WTC11 (cell line): ENCODE measurements at regions of chr17 and their contacts with region 1.

Region 1: GRCh38 chr17:69069226-69069750 is 8.6 kb upstream of the ABCA9 start:
- DNase-seq: no peak
- ATAC-seq: peak; percentile 91
- H3K4me3 Mint-ChIP-seq: no peak overlapping the region
- H3K27ac Mint-ChIP-seq: peak overlapping the region; percentile 57; the same call in 1 of the 2 replicates
- H3K4me1 Mint-ChIP-seq: peaks cover 17% of the 10 kb centered on the region
- H3K27me3 Mint-ChIP-seq: no peaks in the 10 kb centered on the region
- CTCF ChIP-seq: no peak

Region 2: GRCh38 chr17:68924786-68925720 is 144.2 kb before region 1 on chr17:
- CTCF ChIA-PET with region 1: no interaction called
- POLR2A ChIA-PET with region 1: no interaction called
- DNase-seq: no peak
- ATAC-seq: no peak
- H3K4me3 Mint-ChIP-seq: no peak overlapping the region
- H3K27ac Mint-ChIP-seq: no peak overlapping the region
- H3K4me1 Mint-ChIP-seq: peaks cover 33% of the 10 kb centered on the region
- H3K27me3 Mint-ChIP-seq: no peaks in the 10 kb centered on the region
- CTCF ChIP-seq: no peak

Region 3: GRCh38 chr17:69084911-69085310 is 15.6 kb after region 1 on chr17:
- CTCF ChIA-PET with region 1: interaction called, 10 read pairs
- POLR2A ChIA-PET with region 1: no interaction called
- DNase-seq: peak; percentile 79
- ATAC-seq: peak; percentile 100
- H3K4me3 Mint-ChIP-seq: no peak overlapping the region
- H3K27ac Mint-ChIP-seq: no peak overlapping the region
- H3K4me1 Mint-ChIP-seq: peaks cover 3% of the 10 kb centered on the region; the same call in 1 of the 2 replicates
- H3K27me3 Mint-ChIP-seq: peaks cover 2% of the 10 kb centered on the region; the same call in 1 of the 2 replicates
- CTCF ChIP-seq: peak; percentile 68

Region 4: GRCh38 chr17:69150333-69150732 is 81.0 kb after region 1 on chr17:
- CTCF ChIA-PET with region 1: no interaction called
- POLR2A ChIA-PET with region 1: no interaction called
- DNase-seq: no peak
- ATAC-seq: no peak
- H3K4me3 Mint-ChIP-seq: no peak overlapping the region
- H3K27ac Mint-ChIP-seq: no peak overlapping the region
- H3K4me1 Mint-ChIP-seq: peaks cover 5% of the 10 kb centered on the region
- H3K27me3 Mint-ChIP-seq: no peaks in the 10 kb centered on the region
- CTCF ChIP-seq: no peak